ENCODE measurements at regions of chr6 and their contacts with region 1.

Region 1: GRCh38 chr6:84466511-84466910 is 239.1 kb upstream of the CEP162 start:
- DNase-seq: no peak

Region 2: DNA sequence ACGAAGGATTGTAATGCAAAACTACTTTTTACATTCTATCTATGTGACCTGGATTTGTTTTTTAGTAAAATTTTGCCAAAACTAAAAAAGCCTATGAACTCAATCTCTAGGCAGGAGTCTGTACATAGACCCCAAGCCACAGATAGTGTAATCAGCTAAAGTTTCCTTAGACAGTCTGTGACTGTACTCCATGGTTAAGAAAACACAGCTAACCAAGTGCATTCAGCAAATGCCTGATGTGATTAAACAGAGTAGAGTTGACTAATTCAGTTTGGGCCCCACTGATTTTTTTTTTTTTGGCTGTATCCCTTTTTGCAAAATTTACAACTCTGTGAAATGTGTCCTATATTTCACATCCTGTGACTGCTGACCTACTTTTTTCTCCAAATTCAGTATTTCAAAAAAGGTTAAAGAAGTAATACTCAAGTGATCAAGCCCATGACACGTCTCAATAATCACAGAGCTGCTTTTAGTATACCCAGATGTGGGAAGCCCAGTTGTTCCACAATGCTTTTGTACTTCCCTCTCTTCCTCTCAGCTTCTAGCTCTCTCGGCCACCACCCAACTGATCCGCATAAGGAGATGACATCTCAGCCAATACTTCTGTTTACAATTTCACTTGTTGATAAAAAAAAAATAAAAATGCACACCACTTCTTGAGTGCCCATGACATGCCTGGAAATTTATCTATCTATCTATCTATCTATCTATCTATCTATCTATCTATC is 406.6 kb after region 1 on chr6:
- intact Hi-C with region 1: loop called in 1 of 2 experiments (anchors 5 kb)
- DNase-seq: no peak

Measured in posterior vena cava (tissue), 2 donors.